Gastrocnemius medialis (tissue), 4 donors: ENCODE measurements at regions of chr2 and their contacts with region 1.

Region 1: GRCh38 chr2:125679903-125680302 is 976.1 kb upstream of the GYPC start:
- DNase-seq: no peak
- ATAC-seq: no peak
- H3K4me3 ChIP-seq: no peak overlapping the region
- H3K27ac ChIP-seq: no peak overlapping the region
- H3K4me1 ChIP-seq: no peaks in the 10 kb centered on the region
- H3K27me3 ChIP-seq: no peaks in the 10 kb centered on the region
- CTCF ChIP-seq: no peak
- POLR2A ChIP-seq: no peak

Region 2: DNA sequence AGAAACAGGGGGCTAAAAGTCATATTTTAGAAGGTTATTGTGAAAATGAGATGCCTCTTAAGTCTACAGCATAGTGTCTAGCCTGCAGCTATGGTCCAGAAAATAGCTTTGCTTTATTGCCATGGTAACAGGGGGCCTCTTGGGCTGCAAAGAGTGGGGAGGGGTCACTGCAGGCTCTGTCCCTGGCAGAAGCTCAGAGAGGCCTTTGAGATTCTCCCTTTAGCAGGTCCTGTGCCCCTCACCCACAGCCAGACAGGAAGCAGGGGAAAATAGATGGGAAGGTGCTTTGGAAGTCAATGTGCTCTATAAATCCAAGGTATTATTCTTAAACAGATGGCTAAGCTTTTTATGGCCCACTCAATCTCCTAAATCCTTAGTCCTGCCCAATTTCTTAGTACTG is 45.2 kb before region 1 on chr2:
- in situ Hi-C with region 1: no loop called
- intact Hi-C with region 1: no loop called
- DNase-seq: no peak
- ATAC-seq: no peak
- H3K4me3 ChIP-seq: no peak overlapping the region
- H3K27ac ChIP-seq: no peak overlapping the region
- H3K4me1 ChIP-seq: no peaks in the 10 kb centered on the region
- H3K27me3 ChIP-seq: no peaks in the 10 kb centered on the region
- CTCF ChIP-seq: no peak
- POLR2A ChIP-seq: no peak

Region 3: DNA sequence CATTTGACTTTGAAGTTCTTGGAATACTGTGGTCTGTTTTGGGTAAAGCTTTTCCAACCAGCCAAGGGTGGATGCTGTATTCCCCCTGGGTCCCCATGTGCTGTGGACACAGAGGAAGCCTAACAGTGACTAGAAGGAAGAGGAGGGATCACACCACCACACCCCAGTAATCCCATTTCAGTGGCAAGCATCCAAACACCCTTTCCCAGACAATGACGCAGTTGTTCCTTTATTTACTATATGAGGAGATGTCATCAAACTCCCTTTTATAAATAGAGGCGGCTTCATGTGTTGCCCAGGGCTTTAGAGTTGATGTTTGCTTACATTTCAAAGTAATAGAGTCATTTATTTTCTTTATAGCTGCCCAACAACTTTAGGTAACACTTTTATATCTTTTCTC is 16.7 kb after region 1 on chr2:
- in situ Hi-C with region 1: no loop called
- intact Hi-C with region 1: loop called (anchors 2 kb)
- DNase-seq: no peak
- ATAC-seq: no peak
- H3K4me3 ChIP-seq: no peak overlapping the region
- H3K27ac ChIP-seq: no peak overlapping the region
- H3K4me1 ChIP-seq: no peaks in the 10 kb centered on the region
- H3K27me3 ChIP-seq: no peaks in the 10 kb centered on the region
- CTCF ChIP-seq: no peak
- POLR2A ChIP-seq: no peak

Region 4: GRCh38 chr2:126558029-126558428 is 878.1 kb after region 1 on chr2:
- in situ Hi-C with region 1: no loop called
- intact Hi-C with region 1: no loop called
- DNase-seq: no peak
- ATAC-seq: no peak
- H3K4me3 ChIP-seq: no peak overlapping the region
- H3K27ac ChIP-seq: no peak overlapping the region
- H3K4me1 ChIP-seq: no peaks in the 10 kb centered on the region
- H3K27me3 ChIP-seq: no peaks in the 10 kb centered on the region
- CTCF ChIP-seq: no peak
- POLR2A ChIP-seq: no peak